ENCODE measurements at regions of chr18 and their contacts with region 1.

Region 1: GRCh38 chr18:68660354-68661183 is 54.3 kb downstream of the TMX3 start:
- DNase-seq: peak; percentile 39
- ATAC-seq: no peak
- H3K4me3 ChIP-seq: no peak overlapping the region
- H3K4me3 Mint-ChIP-seq: no peak overlapping the region
- H3K27ac ChIP-seq: no peak overlapping the region
- H3K27ac Mint-ChIP-seq: no peak overlapping the region
- H3K4me1 ChIP-seq: peaks cover under 1 to 1% of the 10 kb centered on the region in 2 donors
- H3K4me1 Mint-ChIP-seq: peaks cover 2% of the 10 kb centered on the region
- H3K27me3 ChIP-seq: no peaks in the 10 kb centered on the region
- H3K27me3 Mint-ChIP-seq: no peaks in the 10 kb centered on the region
- CTCF ChIP-seq: peak; percentile 68

Region 2: DNA sequence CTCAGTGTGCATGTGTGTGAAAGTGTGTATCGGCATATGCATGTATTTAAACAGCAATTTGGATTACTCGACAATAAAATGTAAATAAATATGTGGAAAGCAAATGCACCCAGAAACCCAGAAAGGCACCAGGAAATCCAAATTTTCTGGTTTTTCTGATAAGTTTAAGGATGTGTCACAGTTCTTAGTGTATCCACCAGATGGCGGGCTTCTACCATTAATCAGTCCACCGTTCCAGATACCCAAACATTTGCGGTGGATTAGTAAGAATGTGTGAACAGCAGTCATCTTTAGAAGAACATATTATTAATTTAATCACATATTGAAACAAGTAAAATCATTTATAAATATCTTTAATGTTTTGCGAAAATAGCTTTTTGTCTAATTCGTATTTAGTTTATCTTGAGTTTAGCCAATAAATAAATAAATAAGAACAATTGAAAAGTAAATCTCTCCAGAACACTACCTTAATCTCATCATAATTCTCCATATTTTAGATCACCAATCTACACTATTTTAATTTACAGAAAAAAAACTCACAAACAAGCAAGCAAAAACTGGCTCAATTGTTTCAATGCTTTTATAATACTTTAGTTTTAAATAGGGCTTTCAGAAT is 1442.9 kb before region 1 on chr18:
- CTCF ChIA-PET with region 1: interaction called, 30 read pairs
- POLR2A ChIA-PET with region 1: no interaction called
- intact Hi-C with region 1: loop called (anchors 1 kb)
- DNase-seq: peak; percentile 62
- ATAC-seq: peak; percentile 53
- H3K4me3 ChIP-seq: no peak overlapping the region
- H3K4me3 Mint-ChIP-seq: no peak overlapping the region
- H3K27ac ChIP-seq: no peak overlapping the region
- H3K27ac Mint-ChIP-seq: no peak overlapping the region
- H3K4me1 ChIP-seq: no peaks in the 10 kb centered on the region
- H3K4me1 Mint-ChIP-seq: no peaks in the 10 kb centered on the region
- H3K27me3 ChIP-seq: no peaks in the 10 kb centered on the region
- H3K27me3 Mint-ChIP-seq: no peaks in the 10 kb centered on the region
- CTCF ChIP-seq: peak; percentile 89

Region 3: DNA sequence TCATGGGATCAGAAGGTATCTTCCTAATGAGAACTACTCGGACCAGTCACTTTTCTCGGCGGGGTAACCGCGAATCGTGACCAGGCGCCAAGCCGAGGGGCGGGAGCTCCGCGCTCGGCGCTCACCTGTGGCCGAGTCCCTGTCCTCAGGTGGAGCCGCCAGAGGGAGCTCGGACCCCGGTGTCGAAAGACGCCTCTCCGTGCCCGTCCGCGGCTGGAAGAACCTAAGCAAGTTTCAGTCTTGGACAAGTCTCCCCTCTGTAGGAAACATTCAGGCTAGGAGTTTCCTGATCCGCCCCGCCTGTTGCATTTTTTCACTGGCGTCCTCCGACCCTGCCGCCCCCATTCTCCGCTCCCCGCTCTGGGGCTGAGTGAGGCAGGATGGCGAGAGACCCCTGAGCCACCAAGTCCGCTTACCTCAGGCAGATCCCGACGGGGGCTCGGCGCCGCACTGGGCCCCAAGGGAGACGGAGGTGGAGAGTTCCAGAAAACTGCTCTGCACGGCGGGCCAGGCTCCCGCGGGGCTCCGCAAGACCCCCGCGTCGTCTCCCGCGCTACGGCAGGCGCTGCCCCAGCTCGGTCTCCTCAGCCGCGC is 1144.5 kb before region 1 on chr18:
- CTCF ChIA-PET with region 1: interaction called, 18 read pairs
- POLR2A ChIA-PET with region 1: no interaction called
- intact Hi-C with region 1: no loop called
- DNase-seq: peak; percentile 74
- ATAC-seq: no peak
- H3K4me3 ChIP-seq: peak overlapping the region; percentile 42 to 76 (median 71)
- H3K4me3 Mint-ChIP-seq: peak overlapping the region; percentile 93
- H3K27ac ChIP-seq: no peak overlapping the region
- H3K27ac Mint-ChIP-seq: peak overlapping the region; percentile 34
- H3K4me1 ChIP-seq: peaks cover 6 to 17% of the 10 kb centered on the region in 2 donors
- H3K4me1 Mint-ChIP-seq: peaks cover 20% of the 10 kb centered on the region
- H3K27me3 ChIP-seq: peaks cover 0 to 19% (median 15%) of the 10 kb centered on the region in 4 experiments
- H3K27me3 Mint-ChIP-seq: peaks cover 11% of the 10 kb centered on the region
- CTCF ChIP-seq: peak; percentile 29

Region 4: GRCh38 chr18:68507781-68508180 is 152.8 kb before region 1 on chr18:
- CTCF ChIA-PET with region 1: no interaction called
- POLR2A ChIA-PET with region 1: no interaction called
- intact Hi-C with region 1: no loop called
- DNase-seq: no peak
- ATAC-seq: no peak
- H3K4me3 ChIP-seq: no peak overlapping the region
- H3K4me3 Mint-ChIP-seq: no peak overlapping the region
- H3K27ac ChIP-seq: no peak overlapping the region
- H3K27ac Mint-ChIP-seq: no peak overlapping the region
- H3K4me1 ChIP-seq: no peaks in the 10 kb centered on the region
- H3K4me1 Mint-ChIP-seq: no peaks in the 10 kb centered on the region
- H3K27me3 ChIP-seq: no peaks in the 10 kb centered on the region
- H3K27me3 Mint-ChIP-seq: no peaks in the 10 kb centered on the region
- CTCF ChIP-seq: no peak

Region 5: DNA sequence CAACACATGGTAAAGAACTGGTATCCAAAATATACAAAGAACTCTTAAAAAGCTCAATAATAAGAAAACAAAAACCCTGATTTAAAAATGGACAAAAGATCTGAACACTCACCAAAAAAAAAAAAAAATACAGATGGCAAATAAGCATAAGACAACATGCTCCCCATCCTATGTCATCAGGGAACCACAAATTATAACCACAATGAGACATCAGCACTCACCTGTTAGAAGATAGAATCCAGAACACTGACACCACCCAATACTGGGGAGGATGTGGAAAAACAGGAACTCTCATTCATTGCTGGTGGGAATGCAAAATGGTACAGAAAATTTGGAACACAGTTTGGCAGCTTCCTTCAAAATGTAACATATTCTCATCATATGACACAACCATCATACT is 12.4 kb before region 1 on chr18:
- CTCF ChIA-PET with region 1: interaction called, 16 read pairs
- POLR2A ChIA-PET with region 1: no interaction called
- intact Hi-C with region 1: no loop called
- DNase-seq: no peak
- ATAC-seq: no peak
- H3K4me3 ChIP-seq: no peak overlapping the region
- H3K4me3 Mint-ChIP-seq: no peak overlapping the region
- H3K27ac ChIP-seq: no peak overlapping the region
- H3K27ac Mint-ChIP-seq: no peak overlapping the region
- H3K4me1 ChIP-seq: no peaks in the 10 kb centered on the region
- H3K4me1 Mint-ChIP-seq: no peaks in the 10 kb centered on the region
- H3K27me3 ChIP-seq: no peaks in the 10 kb centered on the region
- H3K27me3 Mint-ChIP-seq: no peaks in the 10 kb centered on the region
- CTCF ChIP-seq: no peak

Region 6: GRCh38 chr18:68676913-68677312 is 16.3 kb after region 1 on chr18:
- CTCF ChIA-PET with region 1: interaction called, 15 read pairs
- POLR2A ChIA-PET with region 1: no interaction called
- intact Hi-C with region 1: no loop called
- DNase-seq: no peak
- ATAC-seq: no peak
- H3K4me3 ChIP-seq: no peak overlapping the region
- H3K4me3 Mint-ChIP-seq: no peak overlapping the region
- H3K27ac ChIP-seq: no peak overlapping the region
- H3K27ac Mint-ChIP-seq: no peak overlapping the region
- H3K4me1 ChIP-seq: no peaks in the 10 kb centered on the region
- H3K4me1 Mint-ChIP-seq: no peaks in the 10 kb centered on the region
- H3K27me3 ChIP-seq: no peaks in the 10 kb centered on the region
- H3K27me3 Mint-ChIP-seq: no peaks in the 10 kb centered on the region
- CTCF ChIP-seq: no peak